HEK293 (cell line): ENCODE measurements at regions of chr6 and their contacts with region 1.

Region 1: GRCh38 chr6:136226027-136226673 is 24.0 kb downstream of the MTFR2 start:
- H3K4me3 ChIP-seq: no peak overlapping the region
- H3K27ac ChIP-seq: no peak overlapping the region
- H3K4me1 ChIP-seq: no peaks in the 10 kb centered on the region
- CTCF ChIP-seq: peak; percentile 86

Region 2: DNA sequence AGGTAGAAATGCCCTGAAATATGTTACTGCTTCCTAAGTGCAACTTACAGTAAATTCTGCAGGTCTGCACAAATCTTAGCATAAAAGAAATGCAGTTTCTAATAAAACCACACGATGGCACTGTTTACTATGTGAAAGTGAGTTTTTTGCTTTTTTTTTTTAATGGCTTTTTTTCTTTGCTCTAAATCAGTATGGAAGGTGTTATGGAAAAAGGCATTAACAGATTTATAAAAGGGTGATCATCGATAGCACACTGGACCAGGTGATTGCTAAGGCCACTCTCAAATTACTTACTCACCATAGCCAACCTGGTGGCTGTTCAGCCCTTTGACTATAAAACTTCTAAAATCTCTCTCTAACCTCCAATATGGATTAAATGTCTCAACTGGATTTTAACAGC is 774.5 kb before region 1 on chr6:
- CTCF ChIA-PET with region 1: interaction called, 37 read pairs
- POLR2A ChIA-PET with region 1: interaction called, 5 read pairs
- H3K4me3 ChIP-seq: no peak overlapping the region
- H3K27ac ChIP-seq: no peak overlapping the region
- H3K4me1 ChIP-seq: no peaks in the 10 kb centered on the region
- CTCF ChIP-seq: peak; percentile 47

Region 3: GRCh38 chr6:135535989-135536414 is 690.1 kb before region 1 on chr6:
- CTCF ChIA-PET with region 1: interaction called, 91 read pairs
- POLR2A ChIA-PET with region 1: no interaction called
- H3K4me3 ChIP-seq: no peak overlapping the region
- H3K27ac ChIP-seq: no peak overlapping the region
- H3K4me1 ChIP-seq: no peaks in the 10 kb centered on the region
- CTCF ChIP-seq: no peak

Region 4: GRCh38 chr6:135909737-135910387 is 316.3 kb before region 1 on chr6:
- CTCF ChIA-PET with region 1: interaction called, 21 read pairs
- POLR2A ChIA-PET with region 1: no interaction called
- H3K4me3 ChIP-seq: no peak overlapping the region
- H3K27ac ChIP-seq: no peak overlapping the region
- H3K4me1 ChIP-seq: no peaks in the 10 kb centered on the region
- CTCF ChIP-seq: no peak

Region 5: GRCh38 chr6:136031982-136032381 is 194.2 kb before region 1 on chr6:
- CTCF ChIA-PET with region 1: interaction called, 10 read pairs
- POLR2A ChIA-PET with region 1: no interaction called
- H3K4me3 ChIP-seq: no peak overlapping the region
- H3K27ac ChIP-seq: no peak overlapping the region
- H3K4me1 ChIP-seq: no peaks in the 10 kb centered on the region
- CTCF ChIP-seq: no peak

Region 6: DNA sequence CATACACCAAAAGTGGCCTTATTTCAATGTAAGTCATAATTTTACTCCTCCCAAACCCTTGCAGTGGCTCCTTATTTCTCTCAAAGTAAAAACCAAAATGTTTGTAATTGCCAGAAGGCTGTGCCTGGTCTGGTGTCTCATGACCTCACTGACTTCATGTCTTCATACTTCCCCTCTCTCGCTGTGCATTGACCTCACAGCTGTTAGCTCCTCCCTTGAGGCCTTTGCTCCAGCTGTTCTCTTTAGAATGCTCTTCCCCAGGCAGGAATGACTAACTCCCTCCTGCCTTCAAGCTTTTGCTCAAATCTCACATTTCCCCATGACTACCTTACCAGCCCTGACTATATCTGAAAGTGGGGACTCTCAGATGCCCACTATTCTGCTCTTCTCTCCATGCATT is 59.3 kb before region 1 on chr6:
- CTCF ChIA-PET with region 1: no interaction called
- POLR2A ChIA-PET with region 1: no interaction called
- H3K4me3 ChIP-seq: no peak overlapping the region
- H3K27ac ChIP-seq: no peak overlapping the region
- H3K4me1 ChIP-seq: no peaks in the 10 kb centered on the region
- CTCF ChIP-seq: no peak

Region 7: DNA sequence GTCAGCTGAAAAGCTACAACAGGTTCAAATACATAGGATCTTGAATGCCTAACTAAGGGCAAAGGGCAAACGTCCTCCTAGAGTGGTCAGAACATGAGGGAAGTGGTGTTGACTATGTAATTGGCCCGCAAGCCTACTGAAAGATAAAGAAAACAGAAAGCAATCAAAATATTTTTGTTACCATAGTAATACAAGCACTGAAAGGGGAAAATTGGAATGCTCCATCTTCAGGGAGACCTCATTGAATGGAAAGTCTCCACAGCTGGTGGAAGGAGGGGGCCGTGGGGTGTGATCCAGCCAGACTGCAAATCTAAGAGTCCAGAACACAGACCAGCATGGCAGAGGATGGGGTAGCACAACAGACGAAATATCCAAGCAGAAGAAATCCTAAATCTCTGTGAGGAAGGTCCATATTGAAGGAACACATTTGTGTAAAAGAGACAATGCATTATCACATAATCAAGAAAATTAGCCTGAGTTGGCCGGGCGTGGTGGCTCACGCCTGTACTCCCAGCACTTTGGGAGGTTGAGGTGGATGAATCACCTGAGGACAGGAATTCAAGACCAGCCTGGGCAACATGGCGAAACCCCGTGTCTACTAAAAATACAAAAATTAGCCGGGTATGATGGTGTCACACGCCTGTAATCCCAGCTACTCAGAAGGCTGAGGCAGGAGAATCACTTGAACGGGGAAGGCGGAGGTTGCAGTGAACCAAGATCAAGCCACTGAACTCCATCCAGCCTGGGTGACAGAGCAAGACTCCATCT is 15.6 kb before region 1 on chr6:
- CTCF ChIA-PET with region 1: interaction called, 26 read pairs
- POLR2A ChIA-PET with region 1: no interaction called
- H3K4me3 ChIP-seq: no peak overlapping the region
- H3K27ac ChIP-seq: no peak overlapping the region
- H3K4me1 ChIP-seq: no peaks in the 10 kb centered on the region
- CTCF ChIP-seq: no peak

Region 8: GRCh38 chr6:136317021-136317694 is 91.0 kb after region 1 on chr6:
- CTCF ChIA-PET with region 1: interaction called, 15 read pairs
- POLR2A ChIA-PET with region 1: no interaction called
- H3K4me3 ChIP-seq: no peak overlapping the region
- H3K27ac ChIP-seq: no peak overlapping the region
- H3K4me1 ChIP-seq: no peaks in the 10 kb centered on the region
- CTCF ChIP-seq: peak; percentile 47

Region 9: GRCh38 chr6:136333824-136334464 is 107.8 kb after region 1 on chr6:
- CTCF ChIA-PET with region 1: no interaction called
- POLR2A ChIA-PET with region 1: no interaction called
- H3K4me3 ChIP-seq: no peak overlapping the region
- H3K27ac ChIP-seq: no peak overlapping the region
- H3K4me1 ChIP-seq: no peaks in the 10 kb centered on the region
- CTCF ChIP-seq: no peak